ENCODE measurements at regions of chr3 and their contacts with region 1.

Region 1: GRCh38 chr3:9302425-9303181 is 53.2 kb upstream of the SRGAP3 start:
- DNase-seq: peak; percentile 87 to 96 (median 90)
- ATAC-seq: peak; percentile 99
- H3K4me3 ChIP-seq: no peak overlapping the region
- H3K27ac ChIP-seq: no peak overlapping the region
- H3K4me1 ChIP-seq: no peaks in the 10 kb centered on the region; a peak in 1 of 5 replicates
- H3K27me3 ChIP-seq: peaks cover 0 to 13% of the 10 kb centered on the region in 2 experiments; a peak in 3 of 5 replicates
- CTCF ChIP-seq: peak; percentile 97 to 98 (median 98)
- EP300 ChIP-seq: no peak
- POLR2A ChIP-seq: no peak
- RAD21 ChIP-seq: peak; percentile 98

Region 2: GRCh38 chr3:8970971-8971589 is 331.5 kb before region 1 on chr3:
- CTCF ChIA-PET with region 1: interaction called, 35 read pairs
- POLR2A ChIA-PET with region 1: no interaction called
- in situ Hi-C with region 1: loop called (anchors 5 kb)
- intact Hi-C with region 1: loop called (anchors 1 kb)
- DNase-seq: peak; percentile 76 to 82 (median 78)
- ATAC-seq: peak; percentile 70
- H3K4me3 ChIP-seq: no peak overlapping the region
- H3K27ac ChIP-seq: no peak overlapping the region
- H3K4me1 ChIP-seq: peaks cover 0 to 5% of the 10 kb centered on the region in 2 experiments; a peak in 1 of 5 replicates
- H3K27me3 ChIP-seq: peaks cover 3 to 14% of the 10 kb centered on the region in 2 experiments; a peak in 4 of 5 replicates
- CTCF ChIP-seq: peak; percentile 90 to 98 (median 94)
- EP300 ChIP-seq: no peak
- POLR2A ChIP-seq: no peak
- RAD21 ChIP-seq: peak; percentile 96 to 98

Region 3: DNA sequence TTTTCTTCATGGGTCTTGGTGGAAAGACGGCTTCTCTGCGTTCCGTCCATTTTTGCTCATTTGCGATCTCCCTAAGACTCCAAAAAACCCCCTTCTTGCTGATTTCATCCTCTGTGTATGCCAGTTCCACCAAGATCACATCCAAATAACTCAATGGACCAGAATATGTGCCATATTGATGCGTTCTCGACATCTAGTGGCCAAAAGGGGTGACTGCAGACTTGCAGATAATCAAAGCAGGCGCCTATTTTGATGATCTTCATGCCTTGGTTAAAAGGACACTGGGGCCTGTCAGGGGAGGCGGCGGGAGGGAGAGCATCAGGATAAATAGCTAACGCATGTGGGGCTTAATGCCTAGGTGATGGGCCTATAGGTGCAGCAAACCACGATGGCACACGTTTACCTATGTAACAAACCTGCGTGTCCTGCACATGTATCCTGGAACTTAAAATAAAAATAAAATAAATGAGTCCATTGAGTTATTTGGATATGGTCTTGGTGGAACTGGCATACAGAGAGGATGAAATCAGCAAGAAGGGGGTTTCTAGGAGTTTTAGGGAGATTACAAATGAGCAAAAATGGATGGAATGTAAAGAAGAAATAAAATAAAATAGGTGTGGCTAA is 235.1 kb before region 1 on chr3:
- CTCF ChIA-PET with region 1: no interaction called
- POLR2A ChIA-PET with region 1: no interaction called
- in situ Hi-C with region 1: no loop called
- intact Hi-C with region 1: loop called (anchors 2 kb)
- DNase-seq: peak; percentile 58 to 75 (median 70)
- ATAC-seq: peak; percentile 94
- H3K4me3 ChIP-seq: no peak overlapping the region
- H3K27ac ChIP-seq: no peak overlapping the region
- H3K4me1 ChIP-seq: no peaks in the 10 kb centered on the region
- H3K27me3 ChIP-seq: peaks cover 0 to 17% of the 10 kb centered on the region in 2 experiments; a peak in 2 of 5 replicates
- CTCF ChIP-seq: peak; percentile 89 to 97 (median 89)
- EP300 ChIP-seq: no peak
- POLR2A ChIP-seq: no peak
- RAD21 ChIP-seq: peak; percentile 86 to 92

Region 4: GRCh38 chr3:9168241-9168741 is 134.3 kb before region 1 on chr3:
- CTCF ChIA-PET with region 1: no interaction called
- POLR2A ChIA-PET with region 1: no interaction called
- in situ Hi-C with region 1: no loop called
- intact Hi-C with region 1: loop called (anchors 10 kb)
- DNase-seq: no peak
- ATAC-seq: peak; percentile 55; the same call in 2 of the 3 replicates
- H3K4me3 ChIP-seq: no peak overlapping the region
- H3K27ac ChIP-seq: no peak overlapping the region
- H3K4me1 ChIP-seq: no peaks in the 10 kb centered on the region
- H3K27me3 ChIP-seq: peaks cover 14 to 56% of the 10 kb centered on the region in 2 experiments; a peak in 3 of 5 replicates
- CTCF ChIP-seq: no peak
- EP300 ChIP-seq: no peak
- POLR2A ChIP-seq: no peak
- RAD21 ChIP-seq: no peak

Region 5: GRCh38 chr3:9201266-9201665 is 101.3 kb before region 1 on chr3:
- CTCF ChIA-PET with region 1: no interaction called
- POLR2A ChIA-PET with region 1: no interaction called
- in situ Hi-C with region 1: no loop called
- intact Hi-C with region 1: no loop called
- DNase-seq: no peak
- ATAC-seq: peak; percentile 38; the same call in 1 of the 3 replicates
- H3K4me3 ChIP-seq: no peak overlapping the region
- H3K27ac ChIP-seq: no peak overlapping the region
- H3K4me1 ChIP-seq: peaks cover 4 to 6% of the 10 kb centered on the region in 2 experiments
- H3K27me3 ChIP-seq: peaks cover 13 to 37% of the 10 kb centered on the region in 2 experiments
- CTCF ChIP-seq: 0 out of 6 replicates have a peak, but pooled peaks of 1 of the 3 experiments have one; percentile 2
- EP300 ChIP-seq: no peak
- POLR2A ChIP-seq: no peak
- RAD21 ChIP-seq: no peak; a peak in 1 of 4 replicates

Region 6: DNA sequence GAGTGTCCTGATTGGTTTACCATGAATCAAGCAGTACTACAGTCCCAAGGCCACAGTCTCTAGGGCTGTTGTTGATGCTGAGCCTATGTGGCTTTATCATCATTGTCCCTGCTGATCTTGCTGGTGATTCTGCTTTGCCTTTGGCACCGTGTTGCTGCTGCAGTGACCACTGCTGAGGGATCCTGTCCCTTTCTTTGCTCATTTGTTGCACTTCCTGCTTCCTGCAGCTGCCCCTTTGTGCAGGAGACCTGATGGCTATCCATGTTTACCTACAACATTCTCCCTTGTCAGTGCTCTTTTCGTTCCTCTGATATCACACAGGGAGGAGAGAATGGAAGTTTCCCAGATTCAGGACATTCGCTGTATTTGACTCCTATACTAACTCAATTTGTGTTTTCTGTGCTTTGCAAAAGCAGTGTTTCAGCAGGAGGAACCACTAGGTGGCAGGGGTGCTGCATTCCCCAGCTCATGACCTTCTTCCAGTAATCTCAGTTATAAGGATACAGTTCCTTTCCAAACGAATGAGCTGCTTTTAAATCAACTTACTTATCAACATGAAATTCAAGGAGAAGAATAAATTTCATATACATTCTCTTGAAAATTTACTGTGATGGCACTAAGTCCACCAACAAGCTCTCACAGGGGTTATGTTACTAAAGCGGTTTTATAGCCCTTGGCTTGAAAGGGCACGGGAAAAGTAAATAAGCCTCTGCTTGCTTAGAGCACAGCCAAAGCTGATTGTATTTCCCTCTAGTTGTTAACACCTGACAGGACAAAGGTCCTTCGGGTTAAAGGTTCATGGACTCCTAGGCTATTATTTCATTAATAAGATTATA is 50.5 kb after region 1 on chr3:
- CTCF ChIA-PET with region 1: no interaction called
- POLR2A ChIA-PET with region 1: no interaction called
- in situ Hi-C with region 1: no loop called
- intact Hi-C with region 1: no loop called
- DNase-seq: peak; percentile 70 to 75 (median 74)
- ATAC-seq: peak; percentile 93
- H3K4me3 ChIP-seq: no peak overlapping the region
- H3K27ac ChIP-seq: no peak overlapping the region
- H3K4me1 ChIP-seq: no peaks in the 10 kb centered on the region; a peak in 2 of 5 replicates
- H3K27me3 ChIP-seq: peaks cover 0 to 8% of the 10 kb centered on the region in 2 experiments; a peak in 1 of 5 replicates
- CTCF ChIP-seq: peak; percentile 82 to 98 (median 95)
- EP300 ChIP-seq: peak; percentile 10; the same call in 1 of the 2 replicates
- POLR2A ChIP-seq: no peak
- RAD21 ChIP-seq: peak; percentile 88 to 97

Measured in K562 (cell line).